ENCODE measurements at regions of chr2 and their contacts with region 1.

Region 1: DNA sequence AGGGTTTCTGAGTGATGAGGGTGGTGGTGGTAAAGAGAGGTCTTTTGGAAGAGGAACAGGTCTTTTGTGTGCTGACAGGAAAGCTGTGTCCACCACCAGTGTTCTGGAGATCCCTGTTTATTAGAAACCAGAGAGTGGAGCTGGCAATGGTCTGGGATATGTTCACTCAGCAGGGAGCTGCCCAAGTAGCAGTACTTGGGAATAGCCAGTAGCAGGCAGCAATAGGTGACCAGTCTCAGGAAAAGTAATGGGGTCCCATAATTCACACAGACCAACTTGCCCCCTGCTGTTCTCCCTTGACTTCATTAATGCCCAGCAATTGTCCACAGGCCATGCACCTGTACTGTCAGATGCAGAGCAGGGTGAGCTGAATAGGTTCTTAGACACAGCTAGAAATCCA is 1.8 kb downstream of the TSPYL6 start:
- DNase-seq: no peak
- H3K4me3 ChIP-seq: no peak overlapping the region
- H3K27ac ChIP-seq: no peak overlapping the region
- H3K4me1 ChIP-seq: no peaks in the 10 kb centered on the region
- H3K27me3 ChIP-seq: no peaks in the 10 kb centered on the region
- CTCF ChIP-seq: no peak

Region 2: GRCh38 chr2:54122939-54123338 is 131.2 kb before region 1 on chr2:
- CTCF ChIA-PET with region 1: interaction called, 12 read pairs
- POLR2A ChIA-PET with region 1: no interaction called
- intact Hi-C with region 1: no loop called
- DNase-seq: peak in 1 of 2 experiments; percentile 12
- H3K4me3 ChIP-seq: no peak overlapping the region
- H3K27ac ChIP-seq: no peak overlapping the region
- H3K4me1 ChIP-seq: no peaks in the 10 kb centered on the region
- H3K27me3 ChIP-seq: no peaks in the 10 kb centered on the region
- CTCF ChIP-seq: no peak

Region 3: GRCh38 chr2:54287532-54287931 is 33.4 kb after region 1 on chr2:
- CTCF ChIA-PET with region 1: no interaction called
- POLR2A ChIA-PET with region 1: no interaction called
- intact Hi-C with region 1: no loop called
- DNase-seq: peak in 1 of 2 experiments; percentile 25
- H3K4me3 ChIP-seq: no peak overlapping the region
- H3K27ac ChIP-seq: no peak overlapping the region
- H3K4me1 ChIP-seq: no peaks in the 10 kb centered on the region
- H3K27me3 ChIP-seq: no peaks in the 10 kb centered on the region
- CTCF ChIP-seq: no peak

Region 4: DNA sequence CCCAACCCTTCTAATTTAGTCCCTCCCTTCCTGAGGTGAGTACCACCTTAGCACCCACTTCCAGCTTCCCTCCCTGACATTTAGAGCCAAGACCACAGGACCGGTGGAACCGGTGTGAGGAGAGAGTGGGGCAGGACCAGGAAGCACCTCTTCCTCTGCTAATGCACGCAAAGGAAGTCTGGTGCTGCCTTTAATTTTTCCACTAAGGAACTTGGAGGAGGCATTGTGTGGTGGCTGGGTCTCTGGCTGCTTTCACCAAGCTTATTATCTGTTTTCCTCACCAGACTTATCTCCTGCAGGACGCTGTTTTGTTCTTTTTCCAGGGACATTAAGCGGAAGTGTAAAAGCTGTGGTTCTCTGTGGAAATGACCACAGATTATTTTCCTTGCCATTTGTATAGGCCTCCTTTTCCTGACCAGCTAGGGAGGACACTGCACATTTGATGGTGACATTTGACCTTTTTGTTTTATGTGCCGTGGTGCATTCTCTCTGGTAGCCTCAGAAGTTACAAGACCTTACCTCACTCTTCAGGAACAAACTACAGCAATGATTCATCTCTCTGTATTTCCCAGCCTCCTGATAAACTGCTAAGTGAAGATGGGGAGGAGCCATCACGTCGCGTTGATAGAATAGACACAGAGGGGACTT is 162.1 kb after region 1 on chr2:
- CTCF ChIA-PET with region 1: no interaction called
- POLR2A ChIA-PET with region 1: no interaction called
- intact Hi-C with region 1: no loop called
- DNase-seq: peak; percentile 58 to 80
- H3K4me3 ChIP-seq: no peak overlapping the region
- H3K27ac ChIP-seq: 0 out of 2 replicates have a peak overlapping the region, but pooled peaks have one; percentile 19
- H3K4me1 ChIP-seq: peaks cover 24% of the 10 kb centered on the region
- H3K27me3 ChIP-seq: no peaks in the 10 kb centered on the region
- CTCF ChIP-seq: no peak

Region 5: GRCh38 chr2:54755641-54756326 is 501.6 kb after region 1 on chr2:
- CTCF ChIA-PET with region 1: no interaction called
- POLR2A ChIA-PET with region 1: no interaction called
- intact Hi-C with region 1: no loop called
- DNase-seq: no peak
- H3K4me3 ChIP-seq: no peak overlapping the region
- H3K27ac ChIP-seq: no peak overlapping the region
- H3K4me1 ChIP-seq: 0 out of 2 replicates have a peak, but pooled peaks cover 8% of the 10 kb centered on the region
- H3K27me3 ChIP-seq: no peaks in the 10 kb centered on the region
- CTCF ChIP-seq: no peak

Measured in PC-9 (cell line).